ENCODE measurements at regions of chr2 and their contacts with region 1.

Region 1: GRCh38 chr2:195477248-195477995 is 179.6 kb upstream of the SLC39A10 start:
- DNase-seq: no peak
- ATAC-seq: peak in 3 of 4 experiments; percentile 46 to 69 (median 52)
- H3K4me3 ChIP-seq: no peak overlapping the region
- H3K4me3 Mint-ChIP-seq: no peak overlapping the region
- H3K27ac ChIP-seq: no peak overlapping the region
- H3K27ac Mint-ChIP-seq: peak overlapping the region; percentile 9 to 17
- H3K4me1 ChIP-seq: peaks cover 2 to 3% of the 10 kb centered on the region in 2 experiments
- H3K4me1 Mint-ChIP-seq: peaks cover 15 to 23% (median 17%) of the 10 kb centered on the region in 3 donors
- H3K27me3 ChIP-seq: no peaks in the 10 kb centered on the region
- H3K27me3 Mint-ChIP-seq: no peaks in the 10 kb centered on the region

Region 2: DNA sequence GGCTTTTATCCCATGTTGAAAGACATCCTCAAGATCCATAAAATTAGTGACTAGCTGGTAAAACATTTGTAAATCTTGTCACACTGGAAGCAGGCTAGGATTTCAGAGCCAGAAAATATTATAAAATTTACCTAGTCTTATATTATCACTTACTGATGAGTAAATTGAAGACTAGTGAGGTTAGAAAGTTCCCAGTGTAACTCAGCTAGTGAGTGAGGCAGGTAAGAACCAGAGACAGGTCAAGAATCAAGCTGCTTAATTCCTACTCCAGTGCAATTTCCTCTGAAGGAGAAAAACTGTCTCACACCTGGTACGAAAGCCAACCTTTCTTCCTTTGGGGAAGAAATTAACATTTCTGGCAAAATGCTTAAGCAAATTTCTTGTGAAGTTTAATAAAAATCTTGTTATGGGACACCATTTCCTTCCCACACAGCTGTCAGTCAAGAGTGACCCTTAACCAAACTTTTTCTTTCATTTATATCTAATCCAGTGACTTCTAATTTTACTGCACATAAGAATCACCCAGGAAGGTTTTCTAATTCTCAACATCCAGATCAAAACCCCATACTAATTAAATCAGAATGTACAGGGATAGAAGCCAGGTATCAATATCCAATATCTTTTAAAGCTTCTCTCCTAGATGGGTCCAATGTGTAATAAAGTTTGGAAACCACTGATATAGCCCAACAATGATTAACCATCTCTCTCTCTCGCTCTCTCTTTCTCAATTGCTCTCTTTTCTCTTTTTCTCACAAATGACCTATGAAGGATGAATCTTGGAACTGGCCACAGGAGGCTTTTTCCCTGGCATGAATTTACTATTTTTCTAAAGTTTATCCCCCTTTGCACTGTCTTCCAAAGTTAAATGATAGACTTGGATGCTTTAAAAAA is 84.7 kb before region 1 on chr2:
- CTCF ChIA-PET with region 1: no interaction called
- POLR2A ChIA-PET with region 1: no interaction called
- DNase-seq: no peak
- ATAC-seq: no peak
- H3K4me3 ChIP-seq: no peak overlapping the region
- H3K4me3 Mint-ChIP-seq: no peak overlapping the region
- H3K27ac ChIP-seq: no peak overlapping the region
- H3K27ac Mint-ChIP-seq: no peak overlapping the region
- H3K4me1 ChIP-seq: no peaks in the 10 kb centered on the region
- H3K4me1 Mint-ChIP-seq: no peaks in the 10 kb centered on the region
- H3K27me3 ChIP-seq: no peaks in the 10 kb centered on the region
- H3K27me3 Mint-ChIP-seq: no peaks in the 10 kb centered on the region

Region 3: GRCh38 chr2:195458936-195459335 is 18.5 kb before region 1 on chr2:
- CTCF ChIA-PET with region 1: no interaction called
- POLR2A ChIA-PET with region 1: no interaction called
- DNase-seq: no peak
- ATAC-seq: no peak
- H3K4me3 ChIP-seq: no peak overlapping the region
- H3K4me3 Mint-ChIP-seq: no peak overlapping the region
- H3K27ac ChIP-seq: no peak overlapping the region
- H3K27ac Mint-ChIP-seq: no peak overlapping the region
- H3K4me1 ChIP-seq: no peaks in the 10 kb centered on the region
- H3K4me1 Mint-ChIP-seq: peaks cover 7 to 15% (median 13%) of the 10 kb centered on the region in 3 donors
- H3K27me3 ChIP-seq: no peaks in the 10 kb centered on the region
- H3K27me3 Mint-ChIP-seq: no peaks in the 10 kb centered on the region

Region 4: DNA sequence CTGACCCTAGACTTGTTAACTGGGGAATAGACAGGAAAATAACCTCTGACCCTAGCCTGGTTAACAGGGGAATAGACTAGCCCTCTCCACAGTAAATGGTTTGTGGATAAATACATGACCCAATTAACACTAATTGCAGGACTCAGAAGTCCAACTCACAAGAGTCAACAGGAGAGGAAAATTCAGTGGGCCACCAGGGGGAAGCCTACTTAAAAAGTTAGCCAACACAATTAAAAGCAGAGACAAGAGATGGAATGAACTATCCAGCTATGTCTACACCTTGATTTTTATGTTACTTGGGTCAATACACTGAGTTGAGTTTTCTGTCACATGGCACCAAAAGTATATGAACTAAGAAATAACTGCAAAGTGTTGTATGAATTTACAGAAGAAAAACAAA is 20.8 kb after region 1 on chr2:
- CTCF ChIA-PET with region 1: interaction called, 5 to 16 read pairs
- POLR2A ChIA-PET with region 1: no interaction called
- DNase-seq: peak; percentile 5 to 76 (median 57)
- ATAC-seq: peak; percentile 59 to 80 (median 70)
- H3K4me3 ChIP-seq: no peak overlapping the region
- H3K4me3 Mint-ChIP-seq: no peak overlapping the region
- H3K27ac ChIP-seq: no peak overlapping the region
- H3K27ac Mint-ChIP-seq: peak overlapping the region; percentile 11
- H3K4me1 ChIP-seq: no peaks in the 10 kb centered on the region
- H3K4me1 Mint-ChIP-seq: peaks cover 45 to 52% (median 45%) of the 10 kb centered on the region in 3 donors
- H3K27me3 ChIP-seq: no peaks in the 10 kb centered on the region
- H3K27me3 Mint-ChIP-seq: no peaks in the 10 kb centered on the region

Measured in T-cell (primary cell).